Dendritic cell treated with granulocyte-macrophage colony-stimulating factor and Interleukin-4, amounts not matched to agents 40 ng/mL and 50 ng/mL, for 4 days (primary cell): ENCODE measurements at regions of chr15 and their contacts with region 1.

Region 1: GRCh38 chr15:70097337-70098169 is at the start of gene TLE3:
- H3K4me3 Mint-ChIP-seq: peak within 1 kb of the TSS; percentile 96
- H3K27ac Mint-ChIP-seq: peak within 1 kb of the TSS; percentile 98
- H3K4me1 Mint-ChIP-seq: peaks cover 71% of the 10 kb centered on the region
- H3K27me3 Mint-ChIP-seq: peaks cover 29% of the 10 kb centered on the region

Region 2: DNA sequence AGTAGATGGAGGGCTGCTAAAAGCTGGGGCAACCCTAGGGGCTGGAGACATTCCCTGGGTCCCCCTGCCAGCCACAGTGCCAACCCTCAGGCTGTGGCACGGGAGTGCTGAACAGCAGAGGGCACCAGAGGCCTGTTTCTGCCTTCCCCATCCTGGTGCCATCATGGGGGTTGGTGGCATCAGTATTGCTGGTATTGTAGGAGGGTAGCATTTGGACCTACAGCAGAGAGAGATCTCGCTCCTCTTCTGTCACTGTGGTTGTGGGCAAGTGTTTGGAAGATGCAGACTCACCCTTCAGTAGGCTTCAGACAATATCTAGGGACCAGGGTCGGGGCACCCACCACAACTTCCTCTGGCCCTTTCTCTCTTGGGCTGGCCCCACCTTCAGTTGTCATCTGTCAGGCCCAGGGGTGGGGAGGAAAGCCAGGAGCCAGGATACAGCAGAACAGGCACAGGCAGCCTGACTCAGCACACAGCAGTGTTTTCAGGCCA is 521.5 kb before region 1 on chr15:
- intact Hi-C with region 1: loop called (anchors 10 kb)
- H3K4me3 Mint-ChIP-seq: no peak overlapping the region
- H3K27ac Mint-ChIP-seq: peak overlapping the region; percentile 63
- H3K4me1 Mint-ChIP-seq: peaks cover 52% of the 10 kb centered on the region
- H3K27me3 Mint-ChIP-seq: peaks cover 32% of the 10 kb centered on the region

Region 3: GRCh38 chr15:69729161-69729748 is 368.3 kb before region 1 on chr15:
- intact Hi-C with region 1: loop called (anchors 5 kb)
- H3K4me3 Mint-ChIP-seq: no peak overlapping the region
- H3K27ac Mint-ChIP-seq: no peak overlapping the region
- H3K4me1 Mint-ChIP-seq: peaks cover 49% of the 10 kb centered on the region
- H3K27me3 Mint-ChIP-seq: peaks cover 3% of the 10 kb centered on the region

Region 4: GRCh38 chr15:70083946-70084345 is 13.6 kb before region 1 on chr15:
- intact Hi-C with region 1: no loop called
- H3K4me3 Mint-ChIP-seq: no peak overlapping the region
- H3K27ac Mint-ChIP-seq: no peak overlapping the region
- H3K4me1 Mint-ChIP-seq: peaks cover 40% of the 10 kb centered on the region
- H3K27me3 Mint-ChIP-seq: no peaks in the 10 kb centered on the region

Region 5: GRCh38 chr15:70140543-70141375 is 43.2 kb after region 1 on chr15:
- intact Hi-C with region 1: loop called (anchors 2 kb)
- H3K4me3 Mint-ChIP-seq: peak overlapping the region; percentile 48
- H3K27ac Mint-ChIP-seq: peak overlapping the region; percentile 56
- H3K4me1 Mint-ChIP-seq: peaks cover 60% of the 10 kb centered on the region
- H3K27me3 Mint-ChIP-seq: peaks cover 46% of the 10 kb centered on the region

Region 6: GRCh38 chr15:70466895-70467529 is 369.5 kb after region 1 on chr15:
- intact Hi-C with region 1: loop called (anchors 10 kb)
- H3K4me3 Mint-ChIP-seq: no peak overlapping the region
- H3K27ac Mint-ChIP-seq: peak overlapping the region; percentile 7
- H3K4me1 Mint-ChIP-seq: peaks cover 43% of the 10 kb centered on the region
- H3K27me3 Mint-ChIP-seq: peaks cover 53% of the 10 kb centered on the region

Region 7: GRCh38 chr15:70505411-70505919 is 407.9 kb after region 1 on chr15:
- intact Hi-C with region 1: loop called (anchors 5 kb)
- H3K4me3 Mint-ChIP-seq: no peak overlapping the region
- H3K27ac Mint-ChIP-seq: peak overlapping the region; percentile 95
- H3K4me1 Mint-ChIP-seq: peaks cover 91% of the 10 kb centered on the region
- H3K27me3 Mint-ChIP-seq: peaks cover 25% of the 10 kb centered on the region